WTC11 (cell line): ENCODE measurements at regions of chr1 and their contacts with region 1.

Region 1: GRCh38 chr1:178057912-178058534 is 35.9 kb upstream of the RASAL2 start:
- DNase-seq: no peak
- ATAC-seq: no peak; the same call in none of the 2 replicates
- H3K4me3 Mint-ChIP-seq: no peak overlapping the region
- H3K27ac Mint-ChIP-seq: no peak overlapping the region
- H3K4me1 Mint-ChIP-seq: peaks cover 77% of the 10 kb centered on the region
- H3K27me3 Mint-ChIP-seq: peaks cover 11% of the 10 kb centered on the region; the same call in 1 of the 2 replicates
- CTCF ChIP-seq: no peak

Region 2: GRCh38 chr1:177690996-177691395 is 367.0 kb before region 1 on chr1:
- CTCF ChIA-PET with region 1: no interaction called
- POLR2A ChIA-PET with region 1: interaction called, 10 read pairs
- DNase-seq: no peak
- ATAC-seq: no peak
- H3K4me3 Mint-ChIP-seq: no peak overlapping the region
- H3K27ac Mint-ChIP-seq: no peak overlapping the region
- H3K4me1 Mint-ChIP-seq: no peaks in the 10 kb centered on the region
- H3K27me3 Mint-ChIP-seq: no peaks in the 10 kb centered on the region
- CTCF ChIP-seq: no peak

Region 3: DNA sequence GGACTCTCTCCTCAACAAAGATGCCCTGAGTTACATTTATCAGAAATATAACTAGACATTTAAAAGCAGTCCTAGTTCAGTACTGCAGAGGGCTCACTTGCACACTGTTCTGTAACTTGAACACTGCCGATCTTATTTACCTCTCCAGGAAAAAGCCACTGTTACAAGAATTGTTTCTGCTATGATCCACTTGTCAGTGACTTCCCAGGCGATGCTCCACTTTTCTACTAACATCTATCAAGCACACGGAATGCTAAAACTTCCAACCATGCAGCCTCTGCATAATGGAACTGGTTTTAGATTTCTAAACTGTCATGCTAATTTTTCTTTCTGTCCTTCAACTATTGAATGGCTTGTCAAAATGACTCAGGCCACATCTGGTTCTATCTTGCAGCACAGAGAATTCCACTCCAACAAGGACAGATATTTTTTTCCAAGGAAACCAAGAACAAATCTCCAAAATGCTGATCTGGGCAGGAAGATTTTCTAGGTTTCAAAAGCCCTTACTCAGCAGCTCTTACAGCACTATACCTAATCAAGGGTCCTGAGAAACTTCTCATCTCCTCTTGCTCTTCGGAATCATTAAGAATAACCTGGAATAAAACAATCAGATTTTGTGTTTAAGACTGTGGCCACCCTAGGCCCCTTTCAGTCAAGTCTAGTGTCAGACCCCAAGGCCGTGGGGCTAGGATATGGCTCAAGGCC is 98.1 kb before region 1 on chr1:
- CTCF ChIA-PET with region 1: no interaction called
- POLR2A ChIA-PET with region 1: no interaction called
- DNase-seq: no peak
- ATAC-seq: peak; percentile 60
- H3K4me3 Mint-ChIP-seq: no peak overlapping the region
- H3K27ac Mint-ChIP-seq: no peak overlapping the region
- H3K4me1 Mint-ChIP-seq: peaks cover 16% of the 10 kb centered on the region
- H3K27me3 Mint-ChIP-seq: no peaks in the 10 kb centered on the region
- CTCF ChIP-seq: no peak

Region 4: DNA sequence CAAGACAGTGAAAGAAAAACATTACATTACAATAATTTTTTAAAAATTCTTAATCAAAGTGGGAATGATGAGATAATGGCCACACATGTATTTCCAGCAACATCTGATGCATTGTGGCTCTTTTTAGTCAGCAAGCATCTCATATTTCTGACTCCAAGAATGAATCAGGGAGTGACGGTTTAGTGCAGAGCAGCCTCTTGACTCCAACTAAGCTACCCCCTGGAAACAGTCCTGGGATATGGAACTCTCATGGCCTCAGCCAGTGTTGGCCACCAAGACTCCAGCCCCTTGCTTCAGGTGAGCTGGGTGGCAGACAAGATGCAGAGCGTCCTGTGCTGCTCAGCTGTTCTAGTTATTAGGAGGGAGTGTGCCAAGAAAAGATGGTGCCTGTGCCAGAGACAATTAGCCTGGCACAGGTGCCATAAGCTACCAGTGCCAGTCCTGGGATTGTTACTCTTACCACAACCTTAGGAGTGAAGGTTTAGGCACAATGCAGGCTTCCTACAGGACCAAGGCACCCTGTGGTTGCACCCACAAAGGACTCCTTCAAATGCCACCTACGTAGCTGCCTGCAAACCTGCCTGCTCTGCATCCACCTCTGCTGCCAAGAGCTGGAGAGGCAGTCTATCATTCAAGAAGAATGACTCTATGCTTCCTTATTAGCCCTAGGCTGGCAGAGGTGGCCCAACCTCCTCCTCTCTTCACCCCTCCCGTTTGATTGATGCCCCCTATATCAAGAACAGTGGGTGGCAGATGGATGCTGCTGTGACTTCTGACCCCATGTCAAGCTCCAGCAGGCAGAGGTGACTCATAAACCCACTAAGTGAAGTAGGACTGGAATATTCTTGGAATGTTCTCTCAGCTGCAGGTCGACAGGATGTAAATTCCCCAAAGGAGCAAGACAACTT is 82.2 kb before region 1 on chr1:
- CTCF ChIA-PET with region 1: no interaction called
- POLR2A ChIA-PET with region 1: no interaction called
- DNase-seq: no peak
- ATAC-seq: no peak
- H3K4me3 Mint-ChIP-seq: no peak overlapping the region
- H3K27ac Mint-ChIP-seq: no peak overlapping the region
- H3K4me1 Mint-ChIP-seq: no peaks in the 10 kb centered on the region
- H3K27me3 Mint-ChIP-seq: no peaks in the 10 kb centered on the region
- CTCF ChIP-seq: no peak

Region 5: DNA sequence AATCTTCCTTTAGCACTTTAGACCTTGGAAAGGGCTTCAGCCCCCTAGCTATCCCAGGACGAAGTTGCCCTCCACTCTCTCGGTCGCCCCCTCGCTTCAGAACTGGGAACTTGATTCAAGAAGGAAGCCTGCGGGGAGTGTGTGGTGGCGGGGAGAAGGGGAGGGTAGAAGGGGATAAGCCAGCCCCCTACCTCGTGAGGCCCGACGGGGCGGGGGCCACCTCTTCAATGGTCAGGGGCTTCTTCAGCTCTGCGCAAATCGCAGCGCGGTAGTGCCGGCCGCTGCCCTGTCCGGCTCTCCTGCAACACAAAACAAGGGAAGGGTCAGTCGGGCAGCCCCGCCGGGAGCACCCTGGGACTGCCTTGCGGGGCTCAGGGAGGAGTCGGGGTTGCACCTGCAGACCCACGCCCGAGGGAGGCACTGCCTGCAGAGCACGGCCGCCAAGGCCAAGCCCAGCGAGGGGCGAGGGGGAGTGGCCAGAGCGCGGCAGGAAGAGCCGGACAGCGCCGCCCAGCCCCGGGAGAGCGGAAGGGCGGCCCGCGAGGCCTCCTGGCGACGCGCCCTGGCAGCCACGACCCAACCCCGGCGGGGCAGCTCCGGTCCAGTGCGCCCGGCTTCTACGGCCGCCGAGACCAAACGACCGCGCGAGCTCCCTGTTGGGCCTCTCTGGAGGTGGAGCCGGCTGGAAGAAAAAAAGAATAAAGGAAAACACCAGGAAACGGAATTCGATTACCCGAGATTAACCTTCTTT is 20.3 kb before region 1 on chr1:
- CTCF ChIA-PET with region 1: interaction called, 43 read pairs
- POLR2A ChIA-PET with region 1: interaction called, 3 read pairs
- DNase-seq: peak; percentile 85
- ATAC-seq: peak; percentile 94
- H3K4me3 Mint-ChIP-seq: peak overlapping the region; percentile 58
- H3K27ac Mint-ChIP-seq: no peak overlapping the region
- H3K4me1 Mint-ChIP-seq: peaks cover 17% of the 10 kb centered on the region
- H3K27me3 Mint-ChIP-seq: peaks cover 2% of the 10 kb centered on the region; the same call in 1 of the 2 replicates
- CTCF ChIP-seq: peak; percentile 56

Region 6: GRCh38 chr1:178093205-178093957 is 35.4 kb after region 1 on chr1:
- CTCF ChIA-PET with region 1: interaction called, 15 read pairs
- POLR2A ChIA-PET with region 1: no interaction called
- DNase-seq: peak; percentile 95
- ATAC-seq: peak; percentile 88
- H3K4me3 Mint-ChIP-seq: peak overlapping the region; percentile 81
- H3K27ac Mint-ChIP-seq: peak overlapping the region; percentile 93
- H3K4me1 Mint-ChIP-seq: peaks cover 45% of the 10 kb centered on the region
- H3K27me3 Mint-ChIP-seq: no peaks in the 10 kb centered on the region
- CTCF ChIP-seq: no peak